ENCODE measurements at regions of chr2 and their contacts with region 1.

Region 1: GRCh38 chr2:134118279-134119116 is 135.4 kb upstream of the MGAT5 start:
- DNase-seq: peak; percentile 88
- ATAC-seq: peak; percentile 25
- H3K4me3 ChIP-seq: peak overlapping the region; percentile 2 to 94 (median 83)
- H3K4me3 Mint-ChIP-seq: peak overlapping the region; percentile 94
- H3K27ac ChIP-seq: peak overlapping the region in 1 of 2 donors; percentile 24
- H3K27ac Mint-ChIP-seq: peak overlapping the region; percentile 97
- H3K4me1 ChIP-seq: peaks cover 33 to 38% of the 10 kb centered on the region in 2 donors
- H3K4me1 Mint-ChIP-seq: peaks cover 36% of the 10 kb centered on the region
- H3K27me3 ChIP-seq: no peaks in the 10 kb centered on the region
- H3K27me3 Mint-ChIP-seq: no peaks in the 10 kb centered on the region
- CTCF ChIP-seq: peak; percentile 80

Region 2: DNA sequence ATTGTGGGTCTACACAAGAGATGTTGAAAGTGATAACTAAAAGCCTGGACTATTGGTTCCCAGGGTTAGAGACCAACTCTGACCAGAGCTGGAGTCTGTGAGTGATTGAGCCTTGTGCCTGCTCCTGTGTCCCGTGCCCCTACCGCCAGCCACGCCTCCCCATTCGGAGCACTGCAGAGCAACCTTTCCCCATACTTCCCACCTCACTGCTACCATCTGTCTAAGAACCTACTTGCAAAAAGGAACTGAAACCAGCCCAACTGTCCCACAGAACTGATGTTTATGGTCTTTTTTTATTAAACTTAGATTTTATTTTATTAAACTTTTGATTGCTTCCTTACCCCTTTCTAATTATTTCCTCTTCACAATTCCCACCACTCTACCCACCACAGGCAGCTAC is 165.0 kb before region 1 on chr2:
- CTCF ChIA-PET with region 1: interaction called, 3 read pairs
- POLR2A ChIA-PET with region 1: interaction called, 3 read pairs
- intact Hi-C with region 1: loop called (anchors 2 kb)
- DNase-seq: peak; percentile 83
- ATAC-seq: peak; percentile 88
- H3K4me3 ChIP-seq: peak overlapping the region in 1 of 5 experiments; percentile 18
- H3K4me3 Mint-ChIP-seq: peak overlapping the region; percentile 64
- H3K27ac ChIP-seq: peak overlapping the region; percentile 63 to 73
- H3K27ac Mint-ChIP-seq: peak overlapping the region; percentile 85
- H3K4me1 ChIP-seq: peaks cover 75 to 76% of the 10 kb centered on the region in 2 donors
- H3K4me1 Mint-ChIP-seq: peaks cover 74% of the 10 kb centered on the region
- H3K27me3 ChIP-seq: no peaks in the 10 kb centered on the region
- H3K27me3 Mint-ChIP-seq: no peaks in the 10 kb centered on the region
- CTCF ChIP-seq: no peak

Region 3: DNA sequence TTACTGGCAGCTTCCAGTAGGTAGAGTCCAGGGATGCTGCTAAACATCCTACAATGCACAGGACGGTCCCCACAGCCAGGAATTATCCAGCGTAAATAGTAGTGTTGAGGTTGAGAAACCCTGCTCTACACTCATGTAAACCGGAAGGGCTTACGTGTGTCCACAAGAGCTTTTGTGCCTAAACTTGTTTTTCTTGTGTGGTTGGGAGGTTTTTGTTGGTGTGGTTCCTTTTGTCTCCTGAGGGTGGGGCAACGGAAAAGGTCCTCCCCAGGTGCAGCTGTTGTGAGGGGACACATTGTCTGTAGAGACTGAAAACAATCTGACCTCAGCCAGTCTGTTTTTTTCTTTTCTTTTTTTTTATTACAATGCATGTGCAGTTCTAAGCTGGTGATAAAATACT is 62.7 kb after region 1 on chr2:
- CTCF ChIA-PET with region 1: interaction called, 7 read pairs
- POLR2A ChIA-PET with region 1: interaction called, 3 read pairs
- intact Hi-C with region 1: loop called (anchors 2 kb)
- DNase-seq: peak; percentile 69
- ATAC-seq: peak; percentile 85
- H3K4me3 ChIP-seq: no peak overlapping the region
- H3K4me3 Mint-ChIP-seq: peak overlapping the region; percentile 76
- H3K27ac ChIP-seq: peak overlapping the region; percentile 63 to 81
- H3K27ac Mint-ChIP-seq: peak overlapping the region; percentile 95
- H3K4me1 ChIP-seq: peaks cover 84 to 93% of the 10 kb centered on the region in 2 donors
- H3K4me1 Mint-ChIP-seq: peaks cover 91% of the 10 kb centered on the region
- H3K27me3 ChIP-seq: no peaks in the 10 kb centered on the region
- H3K27me3 Mint-ChIP-seq: no peaks in the 10 kb centered on the region
- CTCF ChIP-seq: peak; percentile 28

Region 4: GRCh38 chr2:134232868-134233727 is 114.6 kb after region 1 on chr2:
- CTCF ChIA-PET with region 1: interaction called, 197 read pairs
- POLR2A ChIA-PET with region 1: no interaction called
- intact Hi-C with region 1: no loop called
- DNase-seq: peak; percentile 63
- ATAC-seq: peak; percentile 31
- H3K4me3 ChIP-seq: peak overlapping the region in 3 of 5 experiments; percentile 7 to 48 (median 30)
- H3K4me3 Mint-ChIP-seq: peak overlapping the region; percentile 55
- H3K27ac ChIP-seq: peak overlapping the region; percentile 63 to 79
- H3K27ac Mint-ChIP-seq: peak overlapping the region; percentile 87
- H3K4me1 ChIP-seq: peaks cover 76% of the 10 kb centered on the region in 2 donors
- H3K4me1 Mint-ChIP-seq: peaks cover 88% of the 10 kb centered on the region
- H3K27me3 ChIP-seq: no peaks in the 10 kb centered on the region
- H3K27me3 Mint-ChIP-seq: no peaks in the 10 kb centered on the region
- CTCF ChIP-seq: no peak

Region 5: DNA sequence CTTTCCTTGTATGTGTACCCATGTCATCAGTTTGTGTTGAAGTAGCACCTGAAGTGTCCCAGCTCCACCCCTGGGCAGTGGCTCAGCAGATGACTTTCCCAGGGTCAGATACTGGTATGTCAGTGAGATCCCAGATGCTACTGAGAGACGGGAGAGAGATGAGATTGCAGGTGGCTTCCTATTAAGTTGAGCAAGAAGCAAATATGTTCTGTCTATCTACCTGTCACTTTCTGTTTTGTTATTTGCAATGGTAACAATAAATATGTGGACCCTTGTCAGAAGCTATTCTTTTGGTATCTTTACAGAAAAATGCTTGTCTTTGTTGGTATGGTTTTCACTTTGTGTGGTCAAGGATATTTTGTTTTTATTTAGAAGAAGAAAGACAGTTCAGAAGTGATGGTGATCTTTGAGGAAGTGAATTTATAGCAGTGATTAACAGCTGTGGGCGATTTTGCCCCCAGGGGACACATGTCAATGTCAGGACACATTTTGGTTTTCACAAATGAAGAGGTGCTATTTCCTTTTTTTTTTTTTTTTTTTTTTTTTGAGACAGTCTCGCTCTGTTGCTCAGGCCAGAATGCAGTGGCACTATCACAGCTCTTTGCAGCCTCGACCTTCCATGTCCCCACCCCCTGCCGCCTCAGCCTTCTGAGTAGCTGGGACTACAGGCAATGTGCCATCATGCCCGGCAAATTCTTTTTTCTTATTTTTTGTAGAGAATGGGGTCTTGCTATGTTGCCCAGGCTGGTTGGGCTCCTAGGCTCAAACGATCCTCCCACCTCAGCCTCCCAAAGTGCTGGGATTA is 156.8 kb after region 1 on chr2:
- CTCF ChIA-PET with region 1: interaction called, 14 read pairs
- POLR2A ChIA-PET with region 1: interaction called, 3 read pairs
- intact Hi-C with region 1: loop called (anchors 1 kb)
- DNase-seq: peak; percentile 93
- ATAC-seq: peak; percentile 91
- H3K4me3 ChIP-seq: peak overlapping the region in 4 of 5 experiments; percentile 6 to 57 (median 26)
- H3K4me3 Mint-ChIP-seq: peak overlapping the region; percentile 90
- H3K27ac ChIP-seq: peak overlapping the region; percentile 77 to 80
- H3K27ac Mint-ChIP-seq: peak overlapping the region; percentile 96
- H3K4me1 ChIP-seq: peaks cover 97% of the 10 kb centered on the region in 2 donors
- H3K4me1 Mint-ChIP-seq: peaks cover 97% of the 10 kb centered on the region
- H3K27me3 ChIP-seq: no peaks in the 10 kb centered on the region
- H3K27me3 Mint-ChIP-seq: no peaks in the 10 kb centered on the region
- CTCF ChIP-seq: no peak

Region 6: GRCh38 chr2:134420259-134420658 is 301.8 kb after region 1 on chr2:
- CTCF ChIA-PET with region 1: interaction called, 398 read pairs
- POLR2A ChIA-PET with region 1: no interaction called
- intact Hi-C with region 1: no loop called
- DNase-seq: no peak
- ATAC-seq: no peak
- H3K4me3 ChIP-seq: no peak overlapping the region
- H3K4me3 Mint-ChIP-seq: no peak overlapping the region
- H3K27ac ChIP-seq: no peak overlapping the region
- H3K27ac Mint-ChIP-seq: no peak overlapping the region
- H3K4me1 ChIP-seq: no peaks in the 10 kb centered on the region
- H3K4me1 Mint-ChIP-seq: no peaks in the 10 kb centered on the region
- H3K27me3 ChIP-seq: no peaks in the 10 kb centered on the region
- H3K27me3 Mint-ChIP-seq: no peaks in the 10 kb centered on the region
- CTCF ChIP-seq: no peak

Region 7: GRCh38 chr2:134918526-134919340 is 800.2 kb after region 1 on chr2 and contains the start of gene CCNT2:
- CTCF ChIA-PET with region 1: no interaction called
- POLR2A ChIA-PET with region 1: no interaction called
- intact Hi-C with region 1: loop called (anchors 5 kb)
- DNase-seq: peak; percentile 100
- ATAC-seq: peak; percentile 82
- H3K4me3 ChIP-seq: peak within 1 kb of the TSS; percentile 78 to 98 (median 93)
- H3K4me3 Mint-ChIP-seq: peak within 1 kb of the TSS; percentile 85
- H3K27ac ChIP-seq: peak within 1 kb of the TSS; percentile 94 to 96
- H3K27ac Mint-ChIP-seq: peak within 1 kb of the TSS; percentile 94
- H3K4me1 ChIP-seq: peaks cover 31 to 32% of the 10 kb centered on the region in 2 donors
- H3K4me1 Mint-ChIP-seq: peaks cover 48% of the 10 kb centered on the region
- H3K27me3 ChIP-seq: no peaks in the 10 kb centered on the region
- H3K27me3 Mint-ChIP-seq: no peaks in the 10 kb centered on the region
- CTCF ChIP-seq: no peak
- total RNA-seq, gene CCNT2: 86.7 and 91.0 TPM in 2 replicates